ENCODE measurements at regions of chr11 and their contacts with region 1.

Region 1: GRCh38 chr11:74492974-74493790 is at the start of gene LIPT2:
- DNase-seq: peak; percentile 100
- H3K4me3 ChIP-seq: peak within 1 kb of the TSS; percentile 74
- H3K27ac ChIP-seq: peak within 1 kb of the TSS; percentile 98
- H3K4me1 ChIP-seq: peaks cover 8% of the 10 kb centered on the region
- H3K27me3 ChIP-seq: no peaks in the 10 kb centered on the region
- CTCF ChIP-seq: no peak
- total RNA-seq, gene LIPT2: 8.6 and 12.6 TPM in 2 replicates

Region 2: DNA sequence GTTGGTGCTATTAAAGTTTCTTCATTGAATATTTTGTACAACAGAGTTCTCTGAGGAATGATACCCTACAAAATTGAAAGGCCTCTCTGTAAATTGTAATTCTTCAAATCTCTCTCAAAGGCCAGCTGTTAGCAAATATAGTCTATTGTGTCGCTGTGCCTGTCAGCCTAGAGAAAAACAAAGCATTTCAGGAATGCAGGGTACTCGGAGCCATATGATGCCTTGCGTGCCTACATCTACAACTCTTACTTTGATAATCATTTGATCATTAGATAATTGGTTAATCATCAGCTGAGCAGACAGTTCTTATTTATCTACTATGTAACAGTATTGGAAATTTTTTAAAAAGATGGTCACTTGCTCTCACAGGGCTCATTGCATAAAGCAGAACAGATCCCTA is 322.8 kb after region 1 on chr11:
- CTCF ChIA-PET with region 1: no interaction called
- POLR2A ChIA-PET with region 1: interaction called, 13 read pairs
- intact Hi-C with region 1: no loop called
- DNase-seq: no peak
- H3K4me3 ChIP-seq: no peak overlapping the region
- H3K27ac ChIP-seq: no peak overlapping the region
- H3K4me1 ChIP-seq: no peaks in the 10 kb centered on the region
- H3K27me3 ChIP-seq: no peaks in the 10 kb centered on the region
- CTCF ChIP-seq: no peak

Region 3: GRCh38 chr11:74948898-74949747 is 455.9 kb after region 1 on chr11 and contains the starts of genes SPCS2 and XRRA1:
- CTCF ChIA-PET with region 1: no interaction called
- POLR2A ChIA-PET with region 1: no interaction called
- intact Hi-C with region 1: loop called (anchors 5 kb)
- DNase-seq: peak; percentile 100
- H3K4me3 ChIP-seq: peak within 1 kb of the TSS; percentile 81
- H3K27ac ChIP-seq: peak within 1 kb of the TSS; percentile 88
- H3K4me1 ChIP-seq: peaks cover 19% of the 10 kb centered on the region
- H3K27me3 ChIP-seq: no peaks in the 10 kb centered on the region
- CTCF ChIP-seq: no peak
- total RNA-seq, gene SPCS2: 207 and 241 TPM in 2 replicates
- total RNA-seq, gene XRRA1: 7.3 and 10.0 TPM in 2 replicates

Measured in A673 (cell line).